ENCODE measurements at regions of chr10 and their contacts with region 1.

Region 1: GRCh38 chr10:56095506-56096225 is 265.4 kb downstream of the ZWINT start:
- DNase-seq: peak; percentile 47

Region 2: DNA sequence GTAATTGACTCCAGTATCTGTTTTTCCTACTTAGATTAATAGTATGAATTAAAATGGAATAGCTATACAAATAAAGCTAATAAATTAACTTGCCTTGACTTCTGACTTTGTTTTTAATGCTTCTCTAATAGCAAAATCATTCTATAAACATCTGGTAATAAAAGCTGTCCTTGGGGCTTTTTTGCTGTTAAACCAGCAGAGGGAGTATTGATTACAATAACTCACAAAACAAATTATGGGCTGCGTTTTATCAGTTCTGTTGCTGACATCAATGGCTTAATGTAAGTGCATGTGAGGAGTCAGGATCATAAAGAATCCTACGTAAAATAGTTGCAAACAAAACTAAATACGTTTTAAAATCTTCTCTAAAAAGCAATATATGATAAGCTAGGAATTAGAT is 1962.5 kb before region 1 on chr10:
- intact Hi-C with region 1: no loop called
- DNase-seq: no peak

Region 3: GRCh38 chr10:56068473-56069263 is 27.0 kb before region 1 on chr10:
- intact Hi-C with region 1: loop called in 1 of 2 experiments (anchors 2 kb)
- DNase-seq: no peak

Measured in posterior vena cava (tissue), 2 donors.